ENCODE measurements at regions of chr14 and their contacts with region 1.

Region 1: GRCh38 chr14:69819607-69820006 is 22.6 kb upstream of the SLC10A1 start:
- DNase-seq: no peak
- ATAC-seq: no peak

Region 2: DNA sequence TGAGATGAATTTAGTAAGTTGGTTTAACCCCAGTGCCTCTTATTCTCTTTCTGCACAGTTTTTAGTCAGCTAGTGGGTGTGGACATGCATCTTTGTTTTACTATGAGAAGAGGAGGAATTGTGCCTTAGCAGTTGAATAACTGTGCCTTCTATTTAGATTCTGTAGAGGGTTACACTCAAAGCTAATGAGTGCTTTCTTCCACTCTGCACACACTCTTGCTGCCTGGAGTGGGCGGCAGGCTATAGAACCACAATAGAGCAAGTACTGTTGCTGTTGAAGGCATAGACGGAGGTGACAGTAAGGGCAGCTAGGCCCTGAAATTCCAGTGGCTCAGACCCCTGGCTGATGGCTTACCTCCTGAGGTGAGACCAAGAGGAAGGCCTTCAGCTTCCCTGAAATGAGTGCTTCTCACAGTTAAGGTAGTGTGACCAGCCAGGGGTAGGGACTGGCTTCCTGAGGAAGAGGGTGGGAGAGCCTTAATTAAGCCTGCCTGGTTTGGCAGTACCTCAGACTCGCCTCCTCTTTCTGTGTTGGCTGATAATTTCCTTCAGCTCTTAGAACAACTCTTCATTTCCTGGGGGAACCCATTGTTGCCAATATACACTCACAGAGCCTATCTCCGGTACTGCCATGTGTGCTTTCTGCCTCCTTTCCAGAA is 183.5 kb before region 1 on chr14:
- intact Hi-C with region 1: no loop called
- DNase-seq: no peak
- ATAC-seq: peak; percentile 54

Region 3: GRCh38 chr14:70027785-70028428 is 208.3 kb after region 1 on chr14:
- intact Hi-C with region 1: loop called (anchors 5 kb)
- DNase-seq: peak; percentile 85
- ATAC-seq: peak; percentile 87